OCI-LY7 (cell line): ENCODE measurements at regions of chr14 and their contacts with region 1.

Region 1: DNA sequence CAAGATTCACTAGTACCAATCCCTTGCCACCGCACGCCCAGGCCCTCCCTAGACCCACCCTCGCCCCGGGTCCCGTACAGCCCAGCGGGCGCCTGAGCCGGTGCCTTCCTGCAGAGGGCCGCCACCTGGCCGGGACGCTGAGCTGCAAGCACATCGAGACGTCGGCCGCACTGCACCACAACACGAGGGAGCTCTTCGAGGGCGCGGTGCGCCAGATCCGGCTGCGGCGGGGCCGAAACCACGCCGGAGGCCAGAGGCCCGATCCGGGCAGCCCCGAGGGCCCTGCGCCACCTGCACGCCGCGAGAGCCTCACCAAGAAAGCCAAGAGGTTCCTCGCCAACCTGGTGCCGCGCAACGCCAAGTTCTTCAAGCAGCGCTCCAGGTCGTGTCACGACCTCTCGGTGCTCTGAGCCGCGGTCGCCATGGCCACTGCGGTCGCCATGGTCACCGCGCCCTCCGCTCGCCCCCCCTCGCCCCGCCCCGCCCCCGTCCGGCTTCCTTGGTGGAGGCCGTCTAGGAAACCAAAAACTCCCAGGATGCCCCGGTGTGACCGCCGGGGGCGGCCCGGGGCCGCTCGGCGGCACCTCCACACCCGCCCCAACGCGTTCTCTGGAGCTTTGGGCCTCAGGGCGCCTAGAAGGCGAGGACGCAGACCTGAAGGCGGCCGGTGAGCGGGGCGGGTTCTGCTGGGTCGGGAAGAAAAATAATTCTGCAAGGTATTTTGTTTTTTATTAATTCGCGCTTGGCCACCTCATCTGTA is 3.7 kb downstream of the REM2 start:
- DNase-seq: peak; percentile 86
- H3K4me3 ChIP-seq: peak overlapping the region; percentile 71
- H3K27ac ChIP-seq: peak overlapping the region; percentile 96
- H3K4me1 ChIP-seq: peaks cover 80% of the 10 kb centered on the region
- CTCF ChIP-seq: peak; percentile 65

Region 2: GRCh38 chr14:22646570-22647254 is 240.0 kb before region 1 on chr14:
- CTCF ChIA-PET with region 1: no interaction called
- POLR2A ChIA-PET with region 1: no interaction called
- intact Hi-C with region 1: no loop called
- DNase-seq: no peak
- H3K4me3 ChIP-seq: no peak overlapping the region
- H3K27ac ChIP-seq: no peak overlapping the region
- H3K4me1 ChIP-seq: peaks cover 3% of the 10 kb centered on the region
- CTCF ChIP-seq: no peak

Region 3: DNA sequence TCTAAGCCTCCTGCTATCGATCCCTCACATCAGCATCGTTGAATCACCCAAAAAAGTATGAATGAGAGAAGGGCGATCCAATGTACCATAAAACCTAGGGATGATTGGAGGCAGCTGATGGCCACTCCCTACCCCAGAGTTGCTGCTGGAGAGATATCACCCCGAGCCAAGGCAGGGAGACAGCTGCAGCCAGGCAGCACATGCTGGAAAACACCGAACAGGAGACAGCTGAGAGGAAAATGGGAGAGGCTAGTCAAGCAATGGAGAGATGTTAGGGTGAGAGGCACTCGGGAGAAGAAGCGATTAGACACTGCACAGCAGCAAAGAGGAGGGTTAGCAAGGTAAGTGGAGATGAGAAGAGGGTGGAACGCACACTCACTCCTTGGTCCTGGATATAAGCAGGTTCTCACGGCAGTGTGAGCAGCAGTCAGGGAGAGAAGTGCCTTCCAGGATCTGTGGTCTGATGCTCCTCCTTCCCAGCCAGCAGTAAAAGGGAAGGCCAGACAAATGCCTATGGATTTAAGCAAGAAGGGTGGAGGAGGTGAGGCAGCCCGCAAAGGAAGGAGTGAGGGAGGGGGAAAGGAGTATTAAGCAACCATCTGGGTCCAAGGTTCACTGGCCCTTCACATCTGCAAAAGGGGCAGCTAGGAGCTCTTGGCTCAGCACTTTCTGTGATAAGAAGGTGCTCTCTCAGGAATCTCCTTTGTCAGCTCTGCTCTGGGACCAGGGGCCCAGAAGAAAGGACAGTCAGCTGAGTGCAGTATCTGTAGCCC is 71.6 kb before region 1 on chr14 and contains the start of gene SLC7A7:
- CTCF ChIA-PET with region 1: no interaction called
- POLR2A ChIA-PET with region 1: interaction called, 5 read pairs
- intact Hi-C with region 1: loop called (anchors 5 kb)
- DNase-seq: peak; percentile 54
- H3K4me3 ChIP-seq: peak within 1 kb of the TSS; percentile 73
- H3K27ac ChIP-seq: peak within 1 kb of the TSS; percentile 86
- H3K4me1 ChIP-seq: peaks cover 77% of the 10 kb centered on the region
- CTCF ChIP-seq: no peak
- total RNA-seq, gene SLC7A7: 30.6 and 32.7 TPM in 2 replicates

Region 4: DNA sequence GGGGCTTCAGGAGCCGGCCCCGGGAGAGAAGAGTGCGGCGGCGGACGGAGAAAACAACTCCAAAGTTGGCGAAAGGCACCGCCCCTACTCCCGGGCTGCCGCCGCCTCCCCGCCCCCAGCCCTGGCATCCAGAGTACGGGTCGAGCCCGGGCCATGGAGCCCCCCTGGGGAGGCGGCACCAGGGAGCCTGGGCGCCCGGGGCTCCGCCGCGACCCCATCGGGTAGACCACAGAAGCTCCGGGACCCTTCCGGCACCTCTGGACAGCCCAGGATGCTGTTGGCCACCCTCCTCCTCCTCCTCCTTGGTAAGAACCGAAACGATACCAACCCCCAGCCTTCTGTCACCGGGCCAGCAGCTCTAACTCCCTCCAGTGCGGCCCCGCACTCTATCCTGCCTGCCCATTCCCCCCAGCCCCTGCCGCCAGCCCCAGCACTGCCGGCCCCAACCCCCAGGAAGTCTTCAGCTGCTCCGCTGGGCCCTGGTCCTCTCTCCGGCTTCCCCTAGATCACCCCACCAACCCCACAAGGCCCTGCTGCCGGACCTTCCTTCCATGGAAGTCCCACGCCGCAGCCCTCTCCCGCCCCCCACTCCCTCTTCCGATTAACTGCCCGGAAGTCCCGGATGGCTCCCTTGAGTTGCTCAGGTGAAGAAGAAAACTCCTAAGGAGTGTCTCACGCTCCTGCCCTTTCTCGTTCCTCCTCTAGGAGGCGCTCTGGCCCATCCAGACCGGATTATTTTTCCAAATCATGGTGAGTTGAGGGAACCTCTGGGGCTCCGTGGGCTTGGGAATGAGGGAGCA is 14.4 kb before region 1 on chr14:
- CTCF ChIA-PET with region 1: interaction called, 8 read pairs
- POLR2A ChIA-PET with region 1: interaction called, 65 read pairs
- intact Hi-C with region 1: loop called (anchors 1 kb)
- DNase-seq: peak; percentile 80
- H3K4me3 ChIP-seq: peak overlapping the region; percentile 86
- H3K27ac ChIP-seq: peak overlapping the region; percentile 93
- H3K4me1 ChIP-seq: peaks cover 31% of the 10 kb centered on the region
- CTCF ChIP-seq: peak; percentile 98

Region 5: DNA sequence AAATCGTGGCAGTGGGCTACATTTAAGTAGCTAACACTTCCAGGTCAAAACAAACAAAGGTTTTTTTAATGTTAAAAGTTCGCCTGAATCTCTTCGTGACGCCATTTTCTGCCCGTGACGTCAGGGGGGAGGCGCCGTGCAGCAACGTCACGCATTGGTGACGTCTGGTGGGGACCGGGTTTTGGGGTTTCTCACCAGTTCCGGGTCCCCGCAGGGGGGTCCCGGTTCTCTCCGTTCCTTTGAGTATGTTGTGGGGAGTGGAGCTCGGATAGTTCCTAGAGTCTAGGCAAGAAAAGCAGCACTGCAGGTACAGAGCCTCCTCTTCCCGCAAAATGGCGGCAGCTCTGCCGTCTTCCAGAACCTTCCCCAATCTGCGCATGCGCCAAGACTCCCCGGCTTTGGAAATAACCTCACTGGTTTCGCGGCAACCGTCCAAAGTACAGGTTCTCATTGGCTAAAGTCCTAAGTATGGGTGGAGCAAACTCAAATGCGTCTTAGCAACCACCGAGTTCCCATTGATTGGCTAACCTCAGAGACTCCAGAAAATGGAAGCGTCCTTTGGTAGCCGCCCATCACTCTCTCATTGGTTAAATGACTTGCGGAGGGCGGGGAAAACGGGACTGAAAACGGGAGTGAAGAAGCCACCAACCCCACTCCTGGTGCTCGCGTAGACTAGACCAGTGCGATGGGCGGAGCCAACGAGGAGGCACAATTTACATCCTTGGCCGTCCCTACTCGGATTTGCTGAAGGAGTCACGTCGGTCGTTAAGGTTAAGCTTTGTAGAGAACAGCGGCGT is 32.3 kb after region 1 on chr14 and contains the start of gene RBM23:
- CTCF ChIA-PET with region 1: no interaction called
- POLR2A ChIA-PET with region 1: interaction called, 42 read pairs
- intact Hi-C with region 1: no loop called
- DNase-seq: peak; percentile 100
- H3K4me3 ChIP-seq: peak within 1 kb of the TSS; percentile 82
- H3K27ac ChIP-seq: peak within 1 kb of the TSS; percentile 78
- H3K4me1 ChIP-seq: peaks cover 36% of the 10 kb centered on the region
- CTCF ChIP-seq: no peak
- total RNA-seq, gene RBM23: 81.0 and 106 TPM in 2 replicates

Region 6: DNA sequence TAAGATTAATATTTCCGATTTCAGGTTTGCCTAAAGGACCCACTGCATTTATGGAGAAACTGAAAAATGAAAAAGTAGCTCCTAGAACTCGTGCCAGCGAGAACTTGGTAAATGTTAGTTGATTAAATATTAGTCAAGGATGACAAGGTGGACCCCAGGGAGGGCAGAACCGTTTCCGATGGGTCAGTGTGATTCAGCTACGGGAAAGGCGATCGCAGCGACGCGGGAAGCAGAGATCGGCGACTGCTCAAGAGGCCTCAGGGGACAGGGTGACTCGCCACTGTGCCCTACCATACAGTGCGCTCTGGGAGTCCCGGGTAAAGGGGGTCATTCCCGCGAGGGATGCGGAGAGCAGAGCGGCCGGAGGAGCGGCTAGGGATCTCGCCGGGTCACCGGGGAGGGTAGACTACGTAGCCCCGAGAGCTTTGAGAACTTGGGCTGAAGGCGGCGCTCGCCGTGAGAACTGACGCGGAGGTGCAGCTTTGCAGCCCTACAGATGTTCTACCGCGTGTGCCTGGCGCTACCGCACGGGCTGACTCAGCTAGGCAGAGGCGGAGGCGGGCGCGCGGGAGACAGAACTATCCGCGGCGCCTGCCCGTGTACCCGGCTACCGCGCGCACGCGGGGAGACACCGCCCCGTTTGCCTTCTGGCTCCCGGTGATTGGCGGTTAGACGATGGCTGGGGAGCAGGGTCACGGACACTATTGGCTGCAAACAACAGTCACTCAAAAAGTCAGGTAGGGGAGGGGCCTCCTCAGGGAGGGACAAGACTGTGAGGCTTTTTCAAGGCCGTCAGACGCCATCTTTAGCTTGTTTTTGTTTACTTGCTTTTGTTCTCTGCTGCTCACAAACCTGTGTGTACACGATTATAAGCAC is 120.1 kb after region 1 on chr14:
- CTCF ChIA-PET with region 1: no interaction called
- POLR2A ChIA-PET with region 1: no interaction called
- intact Hi-C with region 1: loop called (anchors 2 kb)
- DNase-seq: peak; percentile 98
- H3K4me3 ChIP-seq: peak overlapping the region; percentile 80
- H3K27ac ChIP-seq: peak overlapping the region; percentile 82
- H3K4me1 ChIP-seq: peaks cover 44% of the 10 kb centered on the region
- CTCF ChIP-seq: peak; percentile 47